ENCODE measurements at regions of chr2 and their contacts with region 1.

Region 1: GRCh38 chr2:177263451-177264208 is 897 bp downstream of the NFE2L2 start:
- DNase-seq: peak; percentile 98
- ATAC-seq: peak; percentile 64
- H3K4me3 Mint-ChIP-seq: peak overlapping the region; percentile 97
- H3K27ac Mint-ChIP-seq: peak overlapping the region; percentile 98
- H3K4me1 Mint-ChIP-seq: peaks cover 54% of the 10 kb centered on the region
- H3K27me3 Mint-ChIP-seq: no peaks in the 10 kb centered on the region

Region 2: DNA sequence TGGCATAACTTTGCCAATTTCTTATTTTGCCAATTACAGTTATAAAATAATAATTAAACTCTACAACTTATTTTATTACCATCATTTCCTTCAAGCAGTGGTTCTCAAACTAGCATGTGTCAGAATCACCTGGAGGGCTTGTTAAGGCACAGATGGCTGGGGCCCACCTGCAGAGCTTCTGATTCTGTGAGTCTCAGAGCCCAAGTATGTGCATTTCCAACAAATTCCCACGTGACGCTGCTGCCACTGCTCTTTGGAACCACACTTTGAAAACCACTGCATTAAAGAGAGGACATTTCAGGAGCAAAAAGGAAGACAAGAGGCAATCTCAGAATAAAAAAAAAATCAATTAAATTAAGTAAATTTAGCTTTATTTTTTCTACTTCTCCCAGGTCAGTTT is 145.0 kb before region 1 on chr2:
- POLR2A ChIA-PET with region 1: no interaction called
- DNase-seq: no peak
- ATAC-seq: no peak
- H3K4me3 Mint-ChIP-seq: no peak overlapping the region
- H3K27ac Mint-ChIP-seq: no peak overlapping the region
- H3K4me1 Mint-ChIP-seq: no peaks in the 10 kb centered on the region
- H3K27me3 Mint-ChIP-seq: peaks cover 36% of the 10 kb centered on the region

Region 3: DNA sequence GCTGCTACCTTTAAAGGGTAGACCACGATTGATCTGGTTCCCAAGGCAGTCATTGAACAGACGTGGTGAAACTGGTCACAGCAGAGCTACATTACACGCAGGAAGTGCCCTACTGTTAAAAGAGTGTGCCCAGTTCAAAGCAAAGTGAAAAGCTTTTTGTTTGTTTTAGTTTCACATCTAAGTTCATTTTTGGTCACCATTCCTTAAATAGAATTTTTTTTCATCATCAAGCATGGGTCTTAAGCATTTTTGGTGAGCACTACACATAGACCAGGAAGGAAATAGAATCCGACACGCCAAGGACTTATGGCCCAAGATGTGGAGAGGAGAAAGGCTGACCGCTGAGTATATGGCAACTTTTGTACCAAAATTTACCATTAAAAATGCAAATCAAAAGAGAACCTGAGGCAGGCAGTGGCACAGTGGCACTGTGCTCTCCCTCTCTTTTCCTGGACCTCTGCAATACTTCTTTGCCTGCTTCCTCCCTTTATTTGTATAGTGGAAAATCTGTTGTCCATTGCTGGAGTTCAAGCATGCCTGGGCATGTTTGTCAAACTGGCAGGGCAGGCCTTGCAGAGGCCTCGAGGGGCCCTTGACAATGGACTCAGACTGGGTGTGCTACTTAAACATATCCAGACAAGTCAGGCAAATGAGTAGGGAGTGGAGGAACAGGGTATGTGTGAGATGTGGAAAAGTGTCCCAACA is 93.7 kb before region 1 on chr2:
- POLR2A ChIA-PET with region 1: interaction called, 66 read pairs
- DNase-seq: no peak
- ATAC-seq: peak; percentile 76
- H3K4me3 Mint-ChIP-seq: peak overlapping the region; percentile 23
- H3K27ac Mint-ChIP-seq: peak overlapping the region; percentile 67
- H3K4me1 Mint-ChIP-seq: peaks cover 42% of the 10 kb centered on the region
- H3K27me3 Mint-ChIP-seq: peaks cover 10% of the 10 kb centered on the region

Region 4: GRCh38 chr2:177229448-177230242 is 34.0 kb before region 1 on chr2:
- POLR2A ChIA-PET with region 1: interaction called, 37 read pairs
- DNase-seq: no peak
- ATAC-seq: no peak
- H3K4me3 Mint-ChIP-seq: no peak overlapping the region
- H3K27ac Mint-ChIP-seq: peak overlapping the region; percentile 47
- H3K4me1 Mint-ChIP-seq: peaks cover 17% of the 10 kb centered on the region
- H3K27me3 Mint-ChIP-seq: no peaks in the 10 kb centered on the region

Region 5: GRCh38 chr2:177281400-177282180 is 18.0 kb after region 1 on chr2:
- POLR2A ChIA-PET with region 1: interaction called, 256 read pairs
- DNase-seq: no peak
- ATAC-seq: peak; percentile 55
- H3K4me3 Mint-ChIP-seq: no peak overlapping the region
- H3K27ac Mint-ChIP-seq: no peak overlapping the region
- H3K4me1 Mint-ChIP-seq: peaks cover 35% of the 10 kb centered on the region
- H3K27me3 Mint-ChIP-seq: peaks cover 2% of the 10 kb centered on the region

Region 6: DNA sequence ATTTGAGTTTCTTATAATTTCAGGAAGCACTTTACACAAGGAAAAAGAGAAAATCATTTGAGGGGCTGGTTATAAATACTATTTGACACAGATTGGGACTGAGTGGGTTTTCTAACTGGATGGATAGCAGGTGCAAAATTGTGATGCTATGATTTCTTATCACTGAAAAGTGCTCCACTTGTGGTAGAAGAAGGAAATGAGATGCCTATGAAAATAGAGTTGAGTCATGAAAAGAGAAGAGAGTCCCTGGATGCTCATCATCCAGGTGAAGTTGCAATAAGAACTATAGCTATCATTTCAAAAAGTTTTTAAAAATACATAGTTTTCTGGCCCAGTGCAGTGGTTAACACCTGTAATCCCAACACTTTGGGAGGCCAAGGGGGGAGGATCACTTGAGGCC is 40.3 kb after region 1 on chr2:
- POLR2A ChIA-PET with region 1: interaction called, 33 read pairs
- DNase-seq: no peak
- ATAC-seq: no peak
- H3K4me3 Mint-ChIP-seq: no peak overlapping the region
- H3K27ac Mint-ChIP-seq: no peak overlapping the region
- H3K4me1 Mint-ChIP-seq: peaks cover 15% of the 10 kb centered on the region
- H3K27me3 Mint-ChIP-seq: no peaks in the 10 kb centered on the region

Region 7: GRCh38 chr2:177325270-177325929 is 61.8 kb after region 1 on chr2:
- POLR2A ChIA-PET with region 1: interaction called, 20 read pairs
- DNase-seq: no peak
- ATAC-seq: no peak
- H3K4me3 Mint-ChIP-seq: no peak overlapping the region
- H3K27ac Mint-ChIP-seq: no peak overlapping the region
- H3K4me1 Mint-ChIP-seq: peaks cover 6% of the 10 kb centered on the region
- H3K27me3 Mint-ChIP-seq: no peaks in the 10 kb centered on the region

Region 8: DNA sequence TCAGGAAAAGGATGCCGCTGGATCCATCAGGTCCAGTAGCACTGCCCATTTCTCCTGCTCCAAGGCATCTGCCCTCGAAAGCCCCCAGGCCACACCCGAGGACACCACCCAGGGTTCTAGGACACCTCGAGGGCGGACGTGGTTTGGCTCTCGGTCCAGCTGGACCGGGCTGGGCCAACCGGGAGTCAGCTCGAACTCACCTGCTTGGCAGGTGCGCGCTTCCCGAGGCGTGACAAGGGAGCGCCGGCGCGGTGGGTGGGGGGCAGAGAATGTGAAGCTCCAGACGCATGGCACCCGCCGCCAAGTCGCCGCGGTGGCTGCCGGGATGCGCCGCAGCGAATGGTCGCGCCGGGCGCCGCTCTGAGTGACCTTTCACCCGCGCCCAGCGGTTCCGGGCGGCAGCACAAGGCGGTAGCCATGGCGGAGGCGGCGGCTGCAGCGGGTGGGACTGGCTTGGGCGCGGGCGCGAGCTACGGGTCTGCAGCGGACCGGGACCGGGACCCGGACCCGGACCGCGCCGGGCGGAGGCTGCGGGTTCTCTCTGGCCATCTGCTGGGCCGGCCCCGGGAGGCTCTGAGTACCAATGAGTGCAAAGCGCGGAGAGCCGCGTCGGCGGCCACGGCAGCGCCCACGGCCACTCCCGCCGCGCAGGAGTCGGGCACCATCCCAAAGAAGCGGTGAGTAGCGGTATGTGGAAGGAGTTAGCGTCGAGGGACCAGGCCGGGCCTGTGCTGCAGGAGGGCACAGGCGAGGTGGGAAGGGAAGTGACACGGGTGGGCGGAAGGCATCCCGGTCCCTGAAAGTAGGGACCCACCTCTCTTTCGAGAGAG is 129.0 kb after region 1 on chr2 and contains the start of gene AGPS:
- POLR2A ChIA-PET with region 1: interaction called, 19 read pairs
- DNase-seq: peak; percentile 91
- ATAC-seq: peak; percentile 94
- H3K4me3 Mint-ChIP-seq: peak within 1 kb of the TSS; percentile 94
- H3K27ac Mint-ChIP-seq: peak within 1 kb of the TSS; percentile 94
- H3K4me1 Mint-ChIP-seq: peaks cover 45% of the 10 kb centered on the region
- H3K27me3 Mint-ChIP-seq: no peaks in the 10 kb centered on the region
- total RNA-seq, gene AGPS: 46.1 to 46.4 TPM